SK-N-SH (cell line): ENCODE measurements at regions of chr6 and their contacts with region 1.

Region 1: GRCh38 chr6:145948328-145948727 is 15.8 kb downstream of the SHPRH start:
- DNase-seq: no peak
- H3K4me3 ChIP-seq: no peak overlapping the region
- H3K27ac ChIP-seq: no peak overlapping the region
- H3K4me1 ChIP-seq: no peaks in the 10 kb centered on the region
- H3K27me3 ChIP-seq: no peaks in the 10 kb centered on the region
- CTCF ChIP-seq: no peak
- EP300 ChIP-seq: no peak
- RAD21 ChIP-seq: no peak

Region 2: DNA sequence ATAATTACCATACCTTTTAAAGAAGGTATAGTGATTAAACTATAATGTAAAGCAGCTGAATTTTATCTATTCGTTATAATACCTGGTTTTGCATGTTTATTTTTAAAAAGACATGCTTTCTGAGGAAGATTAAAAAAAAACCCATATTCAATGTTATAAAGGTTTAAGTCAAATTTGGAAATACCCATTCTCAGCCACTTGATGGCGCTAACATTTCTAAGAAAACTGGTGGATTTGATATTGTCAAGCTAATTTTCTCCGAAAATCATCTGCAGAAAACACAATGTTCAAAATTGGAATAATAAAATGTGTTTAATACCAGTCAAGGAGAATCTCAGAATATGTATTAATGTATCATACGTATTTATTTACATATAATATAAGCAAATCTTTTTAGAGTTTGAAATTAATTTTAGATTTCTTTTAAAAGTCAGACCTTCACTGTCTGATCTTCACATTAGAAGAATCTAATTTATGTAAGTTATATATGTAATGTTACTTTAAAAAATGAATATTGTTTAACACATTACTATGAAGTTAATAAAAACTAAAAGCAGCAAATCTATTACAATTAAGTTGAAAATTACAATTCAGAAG is 19.2 kb before region 1 on chr6:
- CTCF ChIA-PET with region 1: interaction called, 18 read pairs
- POLR2A ChIA-PET with region 1: no interaction called
- DNase-seq: peak; percentile 3
- H3K4me3 ChIP-seq: no peak overlapping the region
- H3K27ac ChIP-seq: no peak overlapping the region
- H3K4me1 ChIP-seq: no peaks in the 10 kb centered on the region
- H3K27me3 ChIP-seq: no peaks in the 10 kb centered on the region
- CTCF ChIP-seq: peak; percentile 79
- EP300 ChIP-seq: no peak
- RAD21 ChIP-seq: peak; percentile 70